Panc1 (cell line): ENCODE measurements at regions of chr3 and their contacts with region 1.

Region 1: DNA sequence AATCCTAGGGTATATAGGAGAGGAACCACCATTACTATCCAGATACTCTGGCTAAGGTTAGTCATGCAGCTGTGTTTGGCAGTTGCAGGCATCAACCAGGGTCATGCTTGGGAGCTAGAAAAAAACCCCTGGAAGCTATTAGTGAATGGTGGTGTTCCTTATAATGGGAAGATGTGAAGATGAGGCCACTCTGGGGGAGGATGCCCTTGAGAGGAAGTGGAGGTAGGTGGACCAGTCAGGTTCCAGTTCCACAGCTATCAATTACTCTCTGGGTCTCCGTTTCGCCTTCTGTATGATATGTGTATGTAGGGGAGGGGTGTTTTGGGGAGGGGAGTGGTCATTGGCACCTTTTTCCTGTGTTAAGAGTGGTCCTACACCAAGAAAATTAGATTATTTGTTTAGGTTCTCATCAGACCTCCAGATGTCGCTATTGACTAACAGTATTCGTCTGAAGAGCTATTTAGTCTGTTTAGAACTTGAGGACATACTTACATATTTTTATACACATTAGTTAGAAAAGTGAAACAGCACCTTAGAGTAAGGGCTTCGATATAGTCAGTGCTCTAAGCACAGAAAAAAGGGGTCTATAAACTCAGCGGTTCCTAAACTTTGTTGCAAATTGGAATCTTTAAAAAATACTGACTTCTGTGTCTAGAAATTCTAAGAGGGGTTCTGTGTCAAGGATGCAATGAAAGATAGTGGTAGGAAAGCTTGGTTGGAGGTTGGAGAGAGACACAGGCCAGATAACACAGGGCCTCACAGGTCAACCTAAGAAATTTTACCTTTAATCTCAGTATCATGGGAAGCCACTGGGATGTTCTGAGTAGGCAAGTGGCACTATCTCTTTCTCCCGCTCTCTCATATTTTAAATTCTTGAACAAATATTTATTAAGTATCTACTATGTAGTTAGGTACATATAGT is 9.1 kb upstream of the HPS3 start:
- DNase-seq: peak; percentile 76
- ATAC-seq: peak; percentile 87
- H3K4me3 ChIP-seq: no peak overlapping the region
- H3K27ac ChIP-seq: peak overlapping the region; percentile 79
- H3K4me1 ChIP-seq: peaks cover 4% of the 10 kb centered on the region
- H3K27me3 ChIP-seq: no peaks in the 10 kb centered on the region
- CTCF ChIP-seq: peak; percentile 75

Region 2: DNA sequence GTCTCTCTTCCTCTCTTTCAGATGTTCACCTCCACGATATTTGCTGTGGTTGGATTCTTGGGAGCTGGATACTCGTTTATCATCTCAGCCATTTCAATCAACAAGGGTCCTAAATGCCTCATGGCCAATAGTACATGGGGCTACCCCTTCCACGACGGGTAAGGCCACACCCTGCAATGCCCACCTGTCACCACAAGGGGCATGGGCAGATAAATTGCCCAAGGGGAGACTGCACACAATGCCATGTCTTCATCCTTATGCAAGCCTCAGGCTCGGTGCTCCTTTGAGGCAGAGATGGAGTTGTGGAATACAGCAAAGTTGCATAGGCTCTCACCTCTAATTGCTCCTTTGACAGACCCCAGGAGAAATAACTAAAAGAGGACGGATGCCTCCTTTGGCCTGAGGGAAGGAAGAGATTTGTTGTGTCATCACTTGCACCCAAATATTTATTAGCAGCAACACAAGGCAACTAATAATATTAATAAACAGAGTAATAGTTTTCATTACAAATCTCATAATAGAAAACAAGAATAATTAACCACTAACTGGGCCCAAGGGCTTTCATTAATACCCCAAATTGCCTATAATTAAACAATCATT is 367.4 kb after region 1 on chr3:
- CTCF ChIA-PET with region 1: interaction called, 4 read pairs
- POLR2A ChIA-PET with region 1: no interaction called
- in situ Hi-C with region 1: no loop called
- intact Hi-C with region 1: loop called (anchors 2 kb)
- DNase-seq: no peak
- ATAC-seq: 0 out of 2 replicates have a peak, but pooled peaks have one; percentile 28
- H3K4me3 ChIP-seq: no peak overlapping the region
- H3K27ac ChIP-seq: peak overlapping the region; percentile 84; the same call in 1 of the 2 replicates
- H3K4me1 ChIP-seq: 0 out of 2 replicates have a peak, but pooled peaks cover 7% of the 10 kb centered on the region
- H3K27me3 ChIP-seq: no peaks in the 10 kb centered on the region
- CTCF ChIP-seq: peak; percentile 54